Activated CD8-positive, alpha-beta T cell treated with anti-CD3 and anti-CD28 coated beads for 36 hours (primary cell): ENCODE measurements at regions of chr12 and their contacts with region 1.

Region 1: DNA sequence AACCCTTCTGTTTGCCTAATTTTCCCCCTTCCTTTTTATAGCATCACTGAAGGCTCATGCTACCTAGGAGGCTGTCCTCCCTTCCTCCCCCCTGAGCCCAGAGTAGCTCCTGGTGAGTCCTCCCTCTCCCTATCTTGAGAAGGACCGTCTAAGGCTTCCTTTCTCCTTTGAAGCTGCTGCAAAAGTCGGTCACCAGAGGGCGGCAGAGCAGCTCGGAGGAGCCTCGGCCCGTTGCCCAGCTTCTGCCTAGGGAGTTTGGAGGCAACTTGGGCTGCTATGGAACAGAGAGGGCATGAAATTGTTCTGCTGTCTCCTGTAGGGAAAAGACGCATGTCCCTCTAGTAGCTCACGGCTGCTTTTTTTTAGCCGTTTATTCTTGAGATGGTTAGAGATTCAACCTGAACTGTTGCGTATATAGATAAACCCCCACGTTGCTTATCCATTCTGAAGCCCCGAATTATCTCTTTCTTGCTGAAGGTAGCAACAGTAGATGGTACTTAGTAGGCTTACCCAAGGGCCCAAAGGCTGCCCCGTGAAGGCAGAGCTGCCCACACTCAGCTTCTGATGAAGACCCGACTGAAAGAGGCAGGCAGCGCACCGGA is 5.7 kb downstream of the WNT5B start:
- DNase-seq: peak; percentile 72
- ATAC-seq: peak; percentile 75
- H3K4me3 Mint-ChIP-seq: no peak overlapping the region
- H3K27ac Mint-ChIP-seq: no peak overlapping the region
- H3K4me1 Mint-ChIP-seq: peaks cover 10% of the 10 kb centered on the region
- H3K27me3 Mint-ChIP-seq: peaks cover 43% of the 10 kb centered on the region
- CTCF ChIP-seq: peak; percentile 81

Region 2: DNA sequence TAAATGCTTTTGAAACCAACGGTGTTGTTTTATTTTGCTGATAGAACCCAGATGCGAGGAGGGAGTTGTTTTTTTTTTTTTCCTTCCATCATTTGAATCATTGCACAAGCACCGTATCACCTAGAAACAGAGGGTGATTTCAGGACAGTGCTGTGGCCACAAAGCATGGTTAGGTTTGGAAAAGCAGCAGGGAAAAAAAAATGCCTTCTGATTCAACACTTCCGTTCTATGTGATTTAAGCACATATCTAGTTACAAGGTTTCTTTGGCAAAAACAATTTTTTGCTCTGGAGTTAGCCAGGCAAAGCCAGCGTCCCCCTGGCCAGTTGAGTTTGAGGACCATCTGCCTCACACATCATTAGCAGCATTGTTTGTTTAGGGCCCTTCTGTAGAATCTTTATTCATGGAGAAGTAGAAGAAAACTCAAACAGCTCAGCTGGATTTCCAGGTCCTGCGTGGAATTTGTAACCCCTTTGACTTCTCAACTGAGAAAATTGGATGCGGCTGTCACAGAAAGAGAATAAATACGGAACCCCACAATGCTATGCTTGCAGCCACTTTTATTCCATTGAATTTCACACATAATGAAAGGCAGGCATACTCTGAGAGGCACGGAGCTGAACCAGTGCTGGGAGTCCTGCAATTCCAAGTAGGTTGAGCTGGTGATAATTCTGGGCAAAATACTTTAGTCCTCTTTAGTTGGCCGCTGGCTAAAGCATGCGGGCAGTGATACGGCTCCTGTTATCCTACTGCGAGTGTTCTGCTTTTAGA is 22.7 kb before region 1 on chr12:
- CTCF ChIA-PET with region 1: interaction called, 14 read pairs
- POLR2A ChIA-PET with region 1: interaction called, 3 read pairs
- intact Hi-C with region 1: no loop called
- DNase-seq: no peak
- ATAC-seq: no peak
- H3K4me3 Mint-ChIP-seq: no peak overlapping the region
- H3K27ac Mint-ChIP-seq: no peak overlapping the region
- H3K4me1 Mint-ChIP-seq: peaks cover 12% of the 10 kb centered on the region
- H3K27me3 Mint-ChIP-seq: peaks cover 1% of the 10 kb centered on the region
- CTCF ChIP-seq: no peak

Region 3: GRCh38 chr12:1622406-1622805 is 12.3 kb before region 1 on chr12:
- CTCF ChIA-PET with region 1: interaction called, 20 read pairs
- POLR2A ChIA-PET with region 1: no interaction called
- intact Hi-C with region 1: no loop called
- DNase-seq: no peak
- ATAC-seq: no peak
- H3K4me3 Mint-ChIP-seq: no peak overlapping the region
- H3K27ac Mint-ChIP-seq: no peak overlapping the region
- H3K4me1 Mint-ChIP-seq: peaks cover 13% of the 10 kb centered on the region
- H3K27me3 Mint-ChIP-seq: peaks cover 7% of the 10 kb centered on the region
- CTCF ChIP-seq: no peak

Region 4: DNA sequence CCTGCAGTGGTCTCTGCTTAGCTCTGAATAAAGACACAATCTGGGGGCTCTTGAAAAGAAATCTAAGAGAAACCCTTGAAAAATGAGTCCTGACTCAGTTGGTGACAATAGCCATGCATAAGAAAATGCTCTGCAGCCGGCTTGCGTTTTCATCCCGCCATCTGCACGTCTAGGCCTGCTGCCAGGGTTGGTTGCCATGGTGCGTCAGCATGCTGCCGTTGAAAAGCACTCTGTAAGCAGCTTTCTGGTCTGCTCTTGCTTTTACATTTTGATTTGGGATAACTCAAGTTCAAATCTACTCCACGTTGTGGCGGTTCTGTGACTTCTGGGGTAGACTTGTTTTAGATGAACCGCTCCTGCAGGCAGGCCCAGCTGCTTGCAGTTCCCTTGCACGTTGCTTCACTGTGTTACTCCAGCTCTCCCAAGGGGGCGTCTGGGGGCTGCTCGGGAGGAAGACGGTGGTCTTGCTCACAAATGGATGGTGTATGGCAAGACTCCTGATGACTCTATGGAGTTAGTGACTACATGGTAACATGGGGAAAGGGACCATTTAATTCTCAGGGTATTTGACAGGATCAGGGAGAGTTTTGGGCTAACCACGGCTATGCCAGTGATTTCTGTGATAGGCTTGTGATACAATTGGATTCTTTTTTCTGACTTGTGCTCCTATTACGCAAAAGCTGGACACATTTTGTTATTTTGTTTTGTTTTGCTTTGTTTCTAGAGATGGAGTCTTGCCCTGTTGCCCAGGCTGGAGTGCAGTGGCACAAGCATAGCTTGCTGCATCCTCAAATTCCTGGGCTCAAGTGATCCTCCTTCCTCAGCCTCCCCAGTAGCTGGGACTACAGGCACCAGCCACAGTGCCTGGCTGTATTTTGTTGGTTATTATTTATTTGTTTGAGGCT is 10.1 kb after region 1 on chr12:
- CTCF ChIA-PET with region 1: interaction called, 27 read pairs
- POLR2A ChIA-PET with region 1: no interaction called
- intact Hi-C with region 1: no loop called
- DNase-seq: no peak
- ATAC-seq: no peak
- H3K4me3 Mint-ChIP-seq: no peak overlapping the region
- H3K27ac Mint-ChIP-seq: no peak overlapping the region
- H3K4me1 Mint-ChIP-seq: no peaks in the 10 kb centered on the region
- H3K27me3 Mint-ChIP-seq: peaks cover 7% of the 10 kb centered on the region
- CTCF ChIP-seq: no peak

Region 5: GRCh38 chr12:1650260-1650977 is 15.7 kb after region 1 on chr12:
- CTCF ChIA-PET with region 1: interaction called, 38 read pairs
- POLR2A ChIA-PET with region 1: no interaction called
- intact Hi-C with region 1: no loop called
- DNase-seq: no peak
- ATAC-seq: no peak
- H3K4me3 Mint-ChIP-seq: no peak overlapping the region
- H3K27ac Mint-ChIP-seq: no peak overlapping the region
- H3K4me1 Mint-ChIP-seq: no peaks in the 10 kb centered on the region
- H3K27me3 Mint-ChIP-seq: peaks cover 8% of the 10 kb centered on the region
- CTCF ChIP-seq: no peak

Region 6: DNA sequence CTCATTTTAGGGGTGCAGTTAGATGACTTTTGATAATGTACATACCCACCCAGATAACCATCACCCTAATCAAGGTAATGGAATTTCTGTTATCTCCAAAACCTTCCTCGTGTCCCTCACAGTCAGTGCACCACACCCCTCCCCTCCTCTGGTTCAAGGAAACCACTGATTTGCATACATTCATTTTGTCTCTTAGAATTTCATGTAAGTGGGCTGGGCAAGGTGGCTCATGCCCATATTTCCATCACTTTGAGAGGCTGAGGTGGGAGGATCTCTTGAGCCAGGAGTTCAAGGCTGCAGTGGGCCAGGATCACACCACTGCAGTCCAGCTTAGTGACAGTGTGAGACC is 71.9 kb after region 1 on chr12:
- CTCF ChIA-PET with region 1: no interaction called
- POLR2A ChIA-PET with region 1: no interaction called
- intact Hi-C with region 1: no loop called
- DNase-seq: peak; percentile 23
- ATAC-seq: peak; percentile 56
- H3K4me3 Mint-ChIP-seq: no peak overlapping the region
- H3K27ac Mint-ChIP-seq: no peak overlapping the region
- H3K4me1 Mint-ChIP-seq: peaks cover 52% of the 10 kb centered on the region
- H3K27me3 Mint-ChIP-seq: no peaks in the 10 kb centered on the region
- CTCF ChIP-seq: no peak

Region 7: GRCh38 chr12:1814252-1814651 is 179.6 kb after region 1 on chr12:
- CTCF ChIA-PET with region 1: no interaction called
- POLR2A ChIA-PET with region 1: no interaction called
- intact Hi-C with region 1: no loop called
- DNase-seq: no peak
- ATAC-seq: no peak
- H3K4me3 Mint-ChIP-seq: no peak overlapping the region
- H3K27ac Mint-ChIP-seq: no peak overlapping the region
- H3K4me1 Mint-ChIP-seq: peaks cover 2% of the 10 kb centered on the region
- H3K27me3 Mint-ChIP-seq: peaks cover 1% of the 10 kb centered on the region
- CTCF ChIP-seq: no peak